K562 (cell line): ENCODE measurements at regions of chr22 and their contacts with region 1.

Region 1: DNA sequence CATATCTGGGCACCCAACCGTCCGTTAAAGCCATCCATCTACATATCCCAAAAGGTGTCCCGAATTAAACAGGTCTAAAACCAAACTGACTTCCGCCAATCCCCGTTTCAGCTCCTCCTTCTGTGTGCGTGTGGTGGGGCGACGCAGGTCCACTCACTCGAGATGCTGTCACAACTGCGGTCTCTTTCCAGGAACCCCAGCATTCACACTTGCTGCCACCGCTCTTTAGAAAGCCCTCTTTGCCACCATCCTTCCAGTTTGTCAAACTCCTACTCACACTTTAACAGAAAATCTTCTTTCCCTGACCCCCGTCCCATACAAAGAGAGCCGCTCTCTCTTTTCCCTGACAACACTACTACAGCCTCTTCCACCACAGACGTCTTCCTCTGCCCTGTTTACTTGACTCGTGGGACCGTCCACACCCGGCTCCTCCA is 467 bp downstream of the ESS2 start:
- DNase-seq: peak; percentile 79 to 82 (median 80)
- ATAC-seq: peak; percentile 48
- H3K4me3 ChIP-seq: peak overlapping the region; percentile 59
- H3K27ac ChIP-seq: peak overlapping the region; percentile 50
- H3K4me1 ChIP-seq: peaks cover 4 to 19% of the 10 kb centered on the region in 2 experiments; a peak in 4 of 5 replicates
- H3K27me3 ChIP-seq: peaks cover 14 to 26% of the 10 kb centered on the region in 2 experiments; a peak in 4 of 5 replicates
- CTCF ChIP-seq: no peak
- EP300 ChIP-seq: no peak
- POLR2A ChIP-seq: no peak
- RAD21 ChIP-seq: no peak

Region 2: DNA sequence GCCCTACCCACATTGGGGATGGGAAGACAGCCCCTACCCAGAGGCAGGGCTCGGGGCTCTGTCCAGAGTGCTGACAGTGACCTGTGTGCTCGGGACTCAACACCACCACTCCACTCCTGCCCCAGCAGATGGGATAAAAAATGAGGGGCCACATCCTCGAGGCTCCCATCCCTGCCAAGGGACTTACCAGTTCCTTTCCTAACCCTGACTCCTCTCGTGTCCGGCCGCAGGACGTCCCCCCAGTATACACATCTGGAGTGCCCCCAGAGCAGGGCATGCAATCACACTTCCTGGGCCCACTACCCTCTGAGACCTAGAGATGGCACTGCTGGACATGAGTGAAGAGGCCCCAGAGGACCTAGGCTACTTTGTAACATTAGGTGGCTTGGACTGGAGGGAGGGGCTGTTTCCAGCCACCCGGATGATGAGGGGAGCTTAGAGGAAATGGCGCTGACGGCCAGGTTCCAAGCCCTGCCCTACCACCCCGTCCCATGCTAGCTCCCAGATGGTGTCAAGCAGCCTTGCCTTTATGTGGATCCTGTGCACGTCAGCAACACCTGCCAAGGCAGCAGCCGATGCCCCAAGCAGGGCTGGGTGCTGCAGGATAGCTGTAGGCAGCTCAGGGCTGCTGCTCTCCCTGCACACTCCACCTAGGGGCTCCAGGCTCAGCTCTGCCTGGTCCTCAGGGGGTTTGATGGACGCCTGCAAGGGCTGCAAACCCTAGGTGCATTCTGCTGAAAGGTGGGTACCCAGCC is 108.3 kb before region 1 on chr22:
- CTCF ChIA-PET with region 1: no interaction called
- POLR2A ChIA-PET with region 1: no interaction called
- in situ Hi-C with region 1: no loop called
- intact Hi-C with region 1: loop called (anchors 1 kb)
- DNase-seq: peak; percentile 64 to 76 (median 69)
- ATAC-seq: peak; percentile 62
- H3K4me3 ChIP-seq: no peak overlapping the region
- H3K27ac ChIP-seq: no peak overlapping the region
- H3K4me1 ChIP-seq: peaks cover 0 to 27% of the 10 kb centered on the region in 2 experiments; a peak in 1 of 5 replicates
- H3K27me3 ChIP-seq: peaks cover 13 to 26% of the 10 kb centered on the region in 2 experiments; a peak in 4 of 5 replicates
- CTCF ChIP-seq: peak; percentile 39 to 63 (median 55); a peak in 5 of 6 replicates
- EP300 ChIP-seq: no peak
- POLR2A ChIP-seq: peak; percentile 72
- RAD21 ChIP-seq: peak in 1 of 2 experiments; percentile 57; a peak in 2 of 4 replicates

Region 3: GRCh38 chr22:19115628-19116027 is 28.4 kb before region 1 on chr22:
- CTCF ChIA-PET with region 1: no interaction called
- POLR2A ChIA-PET with region 1: interaction called, 19 read pairs
- in situ Hi-C with region 1: no loop called
- intact Hi-C with region 1: no loop called
- DNase-seq: peak in 1 of 4 experiments; percentile 59
- ATAC-seq: peak; percentile 68
- H3K4me3 ChIP-seq: no peak overlapping the region
- H3K27ac ChIP-seq: no peak overlapping the region
- H3K4me1 ChIP-seq: peaks cover 36 to 41% of the 10 kb centered on the region in 2 experiments
- H3K27me3 ChIP-seq: no peaks in the 10 kb centered on the region
- CTCF ChIP-seq: peak; percentile 56 to 75 (median 58)
- EP300 ChIP-seq: no peak
- POLR2A ChIP-seq: no peak
- RAD21 ChIP-seq: peak in 1 of 2 experiments; percentile 67; a peak in 2 of 4 replicates

Region 4: GRCh38 chr22:19130959-19131684 is 12.9 kb before region 1 on chr22 and contains the start of gene TSSK2:
- CTCF ChIA-PET with region 1: no interaction called
- POLR2A ChIA-PET with region 1: interaction called, 38 read pairs
- in situ Hi-C with region 1: no loop called
- intact Hi-C with region 1: no loop called
- DNase-seq: no peak
- ATAC-seq: no peak
- H3K4me3 ChIP-seq: no peak within 1 kb of the TSS
- H3K27ac ChIP-seq: no peak within 1 kb of the TSS
- H3K4me1 ChIP-seq: peaks cover 0 to 45% of the 10 kb centered on the region in 2 experiments; a peak in 2 of 5 replicates
- H3K27me3 ChIP-seq: peaks cover 3 to 11% of the 10 kb centered on the region in 2 experiments; a peak in 4 of 5 replicates
- CTCF ChIP-seq: 0 out of 6 replicates have a peak, but pooled peaks of 1 of the 3 experiments have one; percentile 2
- EP300 ChIP-seq: no peak
- POLR2A ChIP-seq: no peak
- RAD21 ChIP-seq: no peak
- polyA plus RNA-seq, gene TSSK2: not detected

Region 5: GRCh38 chr22:19178656-19179496 is 34.9 kb after region 1 on chr22 and contains the start of gene SLC25A1:
- CTCF ChIA-PET with region 1: interaction called, 3 read pairs
- POLR2A ChIA-PET with region 1: interaction called, 7 read pairs
- in situ Hi-C with region 1: no loop called
- intact Hi-C with region 1: loop called (anchors 1 kb)
- DNase-seq: peak; percentile 100
- ATAC-seq: peak; percentile 86
- H3K4me3 ChIP-seq: peak within 1 kb of the TSS; percentile 76
- H3K27ac ChIP-seq: peak within 1 kb of the TSS; percentile 85
- H3K4me1 ChIP-seq: peaks cover 31 to 89% of the 10 kb centered on the region in 2 experiments
- H3K27me3 ChIP-seq: peaks cover 10 to 22% of the 10 kb centered on the region in 2 experiments; a peak in 4 of 5 replicates
- CTCF ChIP-seq: no peak
- EP300 ChIP-seq: no peak
- POLR2A ChIP-seq: no peak
- RAD21 ChIP-seq: no peak
- polyA plus RNA-seq, gene SLC25A1: 11.0 to 23.7 TPM

Region 6: GRCh38 chr22:19214078-19214473 is 70.1 kb after region 1 on chr22:
- CTCF ChIA-PET with region 1: no interaction called
- POLR2A ChIA-PET with region 1: no interaction called
- in situ Hi-C with region 1: no loop called
- intact Hi-C with region 1: loop called (anchors 1 kb)
- DNase-seq: peak in 1 of 4 experiments; percentile 38
- ATAC-seq: no peak
- H3K4me3 ChIP-seq: no peak overlapping the region
- H3K27ac ChIP-seq: no peak overlapping the region
- H3K4me1 ChIP-seq: peaks cover 9 to 13% of the 10 kb centered on the region in 2 experiments
- H3K27me3 ChIP-seq: peaks cover 30 to 37% of the 10 kb centered on the region in 2 experiments
- CTCF ChIP-seq: no peak
- EP300 ChIP-seq: no peak
- POLR2A ChIP-seq: no peak
- RAD21 ChIP-seq: 0 out of 4 replicates have a peak, but pooled peaks of 1 of the 2 experiments have one; percentile 9

Region 7: DNA sequence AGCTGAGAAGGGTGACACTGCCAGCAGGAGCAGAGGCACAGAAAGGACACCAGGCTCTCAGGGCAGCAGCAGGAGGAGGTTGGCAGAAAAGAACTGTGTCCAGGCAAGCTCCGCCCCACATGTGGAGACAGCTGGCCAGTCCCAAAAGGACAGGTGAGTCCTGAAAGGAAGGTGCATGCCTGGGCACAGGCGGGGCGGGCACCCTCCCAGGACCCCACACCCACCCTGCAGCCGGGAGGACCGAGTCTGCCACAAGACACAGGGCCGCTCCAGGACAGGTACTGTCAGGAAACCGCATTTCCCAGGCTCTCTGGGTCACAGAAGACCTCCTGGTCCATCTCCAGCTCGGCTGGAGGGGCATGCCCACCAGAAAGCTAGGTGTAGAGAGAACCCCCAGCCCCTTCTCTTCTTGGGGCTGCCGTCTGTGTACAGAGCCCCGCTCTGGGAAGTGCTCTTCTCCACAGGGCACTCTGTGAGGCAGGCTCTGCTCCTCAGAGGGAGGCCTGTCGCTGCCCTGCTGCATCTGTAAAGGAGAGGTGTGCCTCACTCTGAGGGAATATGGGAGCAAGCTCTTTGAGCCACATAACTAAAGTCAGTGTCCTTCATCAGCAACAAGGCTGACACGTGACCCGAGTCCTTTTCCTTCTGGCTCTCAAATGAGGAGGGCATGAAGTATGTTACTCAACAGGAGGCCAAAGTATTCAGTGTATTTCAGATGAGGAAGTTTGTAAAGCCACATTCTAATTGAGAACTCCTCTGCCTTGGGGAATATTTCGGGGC is 97.0 kb after region 1 on chr22:
- CTCF ChIA-PET with region 1: no interaction called
- POLR2A ChIA-PET with region 1: no interaction called
- in situ Hi-C with region 1: no loop called
- intact Hi-C with region 1: no loop called
- DNase-seq: peak in 2 of 4 experiments; percentile 33 to 37
- ATAC-seq: peak; percentile 40
- H3K4me3 ChIP-seq: no peak overlapping the region
- H3K27ac ChIP-seq: no peak overlapping the region
- H3K4me1 ChIP-seq: peaks cover 4 to 6% of the 10 kb centered on the region in 2 experiments; a peak in 4 of 5 replicates
- H3K27me3 ChIP-seq: peaks cover 32 to 53% of the 10 kb centered on the region in 2 experiments; a peak in 4 of 5 replicates
- CTCF ChIP-seq: no peak
- EP300 ChIP-seq: no peak
- POLR2A ChIP-seq: no peak
- RAD21 ChIP-seq: no peak

Region 8: DNA sequence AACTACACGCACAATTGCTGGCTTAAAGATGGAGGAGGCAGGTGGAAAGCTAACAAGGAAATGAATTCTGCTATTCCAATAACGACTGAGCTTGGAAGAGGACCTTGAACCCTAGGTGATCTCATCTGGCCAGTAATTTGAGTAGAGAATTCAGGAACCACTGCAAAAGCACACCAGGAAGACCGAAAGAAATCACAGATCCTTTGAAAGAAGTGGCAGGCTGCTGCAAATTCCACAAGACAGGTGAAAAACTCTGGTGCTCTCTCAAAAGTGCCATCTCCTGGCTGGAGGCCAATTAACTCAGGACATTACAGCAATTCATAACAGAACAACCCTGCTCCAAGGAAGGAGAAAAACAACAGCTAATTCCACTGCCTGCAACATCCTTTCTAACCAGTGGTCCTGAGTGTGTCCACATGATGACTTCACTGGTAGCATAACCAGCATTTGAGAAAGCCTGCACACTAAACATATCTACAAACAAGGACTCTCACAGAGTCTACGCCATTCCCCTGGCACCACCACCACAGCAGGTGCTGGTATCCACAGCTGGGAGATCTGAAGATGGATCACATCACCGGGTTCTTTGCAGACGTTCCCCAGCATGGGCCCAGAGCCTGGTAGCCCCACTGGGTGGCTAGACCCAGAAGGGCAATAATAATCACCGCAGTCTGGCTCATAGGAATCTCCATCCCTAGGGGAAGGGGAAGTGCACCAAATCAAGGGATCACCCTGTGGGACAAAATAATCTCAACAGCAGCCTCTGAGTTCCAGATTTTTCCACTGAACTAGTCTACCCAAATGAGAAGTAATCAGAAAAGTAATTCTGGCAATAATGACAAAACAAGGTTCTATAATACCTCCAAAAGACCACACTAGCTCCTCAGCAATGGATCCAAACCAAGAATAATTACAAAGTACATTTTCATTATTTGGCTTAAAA is 192.4 kb after region 1 on chr22:
- CTCF ChIA-PET with region 1: no interaction called
- POLR2A ChIA-PET with region 1: no interaction called
- in situ Hi-C with region 1: no loop called
- intact Hi-C with region 1: no loop called
- DNase-seq: peak in 2 of 4 experiments; percentile 14 to 16
- ATAC-seq: no peak
- H3K4me3 ChIP-seq: no peak overlapping the region
- H3K27ac ChIP-seq: no peak overlapping the region
- H3K4me1 ChIP-seq: no peaks in the 10 kb centered on the region
- H3K27me3 ChIP-seq: no peaks in the 10 kb centered on the region
- CTCF ChIP-seq: no peak
- EP300 ChIP-seq: no peak
- POLR2A ChIP-seq: no peak
- RAD21 ChIP-seq: no peak

Region 9: GRCh38 chr22:19806213-19807145 is 662.5 kb after region 1 on chr22:
- CTCF ChIA-PET with region 1: no interaction called
- POLR2A ChIA-PET with region 1: no interaction called
- in situ Hi-C with region 1: no loop called
- intact Hi-C with region 1: no loop called
- DNase-seq: peak; percentile 91 to 100 (median 98)
- ATAC-seq: peak; percentile 95
- H3K4me3 ChIP-seq: no peak overlapping the region
- H3K27ac ChIP-seq: no peak overlapping the region
- H3K4me1 ChIP-seq: peaks cover 13 to 68% of the 10 kb centered on the region in 2 experiments
- H3K27me3 ChIP-seq: no peaks in the 10 kb centered on the region
- CTCF ChIP-seq: no peak; a peak in 1 of 6 replicates
- EP300 ChIP-seq: peak; percentile 68
- POLR2A ChIP-seq: no peak
- RAD21 ChIP-seq: peak in 1 of 2 experiments; percentile 22; a peak in 2 of 4 replicates